GM10248 (cell line): ENCODE measurements at regions of chr5 and their contacts with region 1.

Region 1: DNA sequence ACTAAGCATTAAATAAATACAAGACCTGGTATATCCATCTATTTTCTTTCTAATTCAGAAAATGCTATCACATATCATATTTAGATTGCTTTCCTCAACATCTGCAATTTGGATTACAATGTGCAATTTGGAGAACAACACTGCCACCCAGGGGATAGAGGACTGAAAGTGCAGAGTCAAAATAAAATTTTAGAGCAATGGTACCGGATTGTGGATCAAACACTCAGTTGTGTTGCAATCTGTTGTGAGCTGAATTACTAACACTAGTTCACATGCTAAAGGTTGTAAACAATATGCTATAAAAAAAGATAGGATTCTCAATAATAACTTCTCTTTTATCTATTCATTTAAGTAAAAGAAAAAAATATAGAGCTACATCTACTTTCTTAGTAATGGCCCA is 11.9 kb upstream of the SRFBP1 start:
- DNase-seq: no peak
- CTCF ChIP-seq: peak; percentile 62

Region 2: GRCh38 chr5:120655828-120656435 is 1293.9 kb before region 1 on chr5:
- CTCF ChIA-PET with region 1: interaction called, 11 read pairs
- POLR2A ChIA-PET with region 1: no interaction called
- DNase-seq: no peak
- CTCF ChIP-seq: peak; percentile 64

Region 3: GRCh38 chr5:121962347-121962670 is 12.4 kb after region 1 on chr5:
- CTCF ChIA-PET with region 1: interaction called, 66 read pairs
- POLR2A ChIA-PET with region 1: no interaction called
- DNase-seq: peak; percentile 16
- CTCF ChIP-seq: no peak

Region 4: DNA sequence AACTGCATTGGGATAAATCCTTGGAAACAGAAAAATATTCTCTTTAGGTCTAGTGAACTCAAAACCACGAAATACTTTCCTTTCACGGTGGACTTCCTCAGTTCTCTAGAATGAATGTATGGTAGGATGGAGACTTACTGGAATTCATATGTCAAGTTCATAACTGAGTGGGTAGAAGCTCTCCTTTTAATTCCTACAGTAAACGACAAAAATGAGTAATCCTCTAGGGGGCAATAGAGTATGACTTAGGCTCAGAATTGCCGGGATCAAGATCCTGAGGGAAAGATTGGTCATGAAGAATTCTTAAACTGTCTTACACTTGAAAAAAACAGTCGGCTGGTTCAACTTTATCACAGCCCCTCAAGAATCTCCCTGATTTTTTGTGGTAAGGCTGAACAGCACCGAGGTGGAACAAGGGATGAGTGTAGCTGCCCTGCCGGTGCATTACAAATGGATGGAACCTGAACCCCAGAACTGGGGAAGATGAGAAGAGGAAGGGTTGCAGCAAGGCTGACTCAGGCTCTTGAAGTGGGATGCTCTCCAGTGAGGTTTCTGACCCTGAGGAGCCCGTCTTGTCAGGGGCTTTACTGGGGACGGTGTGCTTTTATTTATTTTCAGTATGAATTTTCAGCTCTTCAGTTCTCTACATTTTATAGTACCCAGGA is 142.2 kb after region 1 on chr5:
- CTCF ChIA-PET with region 1: no interaction called
- POLR2A ChIA-PET with region 1: no interaction called
- DNase-seq: no peak
- CTCF ChIP-seq: no peak